Naive thymus-derived CD4-positive, alpha-beta T cell (primary cell): ENCODE measurements at regions of chr3 and their contacts with region 1.

Region 1: GRCh38 chr3:14467814-14468620 is 65.6 kb downstream of the SLC6A6 start:
- DNase-seq: peak; percentile 18 to 63 (median 40)
- ATAC-seq: peak; percentile 77
- H3K4me3 ChIP-seq: no peak overlapping the region
- H3K4me3 Mint-ChIP-seq: no peak overlapping the region
- H3K27ac ChIP-seq: no peak overlapping the region
- H3K27ac Mint-ChIP-seq: peak overlapping the region in 2 of 9 donors; percentile 56 to 75
- H3K4me1 ChIP-seq: no peaks in the 10 kb centered on the region
- H3K4me1 Mint-ChIP-seq: peaks cover 0 to 6% (median 0%) of the 10 kb centered on the region in 7 donors
- H3K27me3 ChIP-seq: no peaks in the 10 kb centered on the region
- H3K27me3 Mint-ChIP-seq: no peaks in the 10 kb centered on the region

Region 2: GRCh38 chr3:14203521-14204079 is 264.4 kb before region 1 on chr3:
- CTCF ChIA-PET with region 1: interaction called, 24 read pairs
- POLR2A ChIA-PET with region 1: no interaction called
- intact Hi-C with region 1: loop called in 1 of 2 experiments (anchors 1 kb)
- DNase-seq: peak in 6 of 9 donors; percentile 27 to 41 (median 33)
- ATAC-seq: peak; percentile 80
- H3K4me3 ChIP-seq: no peak overlapping the region
- H3K4me3 Mint-ChIP-seq: no peak overlapping the region
- H3K27ac ChIP-seq: no peak overlapping the region
- H3K27ac Mint-ChIP-seq: peak overlapping the region in 4 of 9 donors; percentile 12 to 83 (median 55)
- H3K4me1 ChIP-seq: peaks cover 0 to 5% of the 10 kb centered on the region in 2 donors
- H3K4me1 Mint-ChIP-seq: peaks cover 0 to 7% (median 5%) of the 10 kb centered on the region in 7 donors
- H3K27me3 ChIP-seq: no peaks in the 10 kb centered on the region
- H3K27me3 Mint-ChIP-seq: no peaks in the 10 kb centered on the region

Region 3: GRCh38 chr3:14274999-14275961 is 192.7 kb before region 1 on chr3:
- CTCF ChIA-PET with region 1: interaction called, 3 read pairs
- POLR2A ChIA-PET with region 1: no interaction called
- intact Hi-C with region 1: loop called in 1 of 2 experiments (anchors 5 kb)
- DNase-seq: no peak
- ATAC-seq: no peak
- H3K4me3 ChIP-seq: no peak overlapping the region
- H3K4me3 Mint-ChIP-seq: no peak overlapping the region
- H3K27ac ChIP-seq: no peak overlapping the region
- H3K27ac Mint-ChIP-seq: no peak overlapping the region
- H3K4me1 ChIP-seq: no peaks in the 10 kb centered on the region
- H3K4me1 Mint-ChIP-seq: no peaks in the 10 kb centered on the region
- H3K27me3 ChIP-seq: no peaks in the 10 kb centered on the region
- H3K27me3 Mint-ChIP-seq: peaks cover 0 to 10% (median under 1%) of the 10 kb centered on the region in 5 donors

Region 4: GRCh38 chr3:14426063-14426620 is 41.9 kb before region 1 on chr3:
- CTCF ChIA-PET with region 1: interaction called, 11 read pairs
- POLR2A ChIA-PET with region 1: no interaction called
- intact Hi-C with region 1: no loop called
- DNase-seq: peak in 7 of 9 donors; percentile 16 to 33 (median 29)
- ATAC-seq: peak; percentile 75
- H3K4me3 ChIP-seq: peak overlapping the region; percentile 24
- H3K4me3 Mint-ChIP-seq: peak overlapping the region; percentile 50 to 74 (median 69)
- H3K27ac ChIP-seq: peak overlapping the region; percentile 62
- H3K27ac Mint-ChIP-seq: peak overlapping the region; percentile 61 to 100 (median 87)
- H3K4me1 ChIP-seq: peaks cover 72 to 92% of the 10 kb centered on the region in 2 donors
- H3K4me1 Mint-ChIP-seq: peaks cover 76 to 89% (median 86%) of the 10 kb centered on the region in 7 donors
- H3K27me3 ChIP-seq: no peaks in the 10 kb centered on the region
- H3K27me3 Mint-ChIP-seq: no peaks in the 10 kb centered on the region

Region 5: GRCh38 chr3:14640157-14640562 is 172.1 kb after region 1 on chr3:
- CTCF ChIA-PET with region 1: no interaction called
- POLR2A ChIA-PET with region 1: no interaction called
- intact Hi-C with region 1: no loop called
- DNase-seq: no peak
- ATAC-seq: no peak
- H3K4me3 ChIP-seq: no peak overlapping the region
- H3K4me3 Mint-ChIP-seq: no peak overlapping the region
- H3K27ac ChIP-seq: no peak overlapping the region
- H3K27ac Mint-ChIP-seq: no peak overlapping the region
- H3K4me1 ChIP-seq: no peaks in the 10 kb centered on the region
- H3K4me1 Mint-ChIP-seq: peaks cover 0 to 4% (median under 1%) of the 10 kb centered on the region in 7 donors
- H3K27me3 ChIP-seq: no peaks in the 10 kb centered on the region
- H3K27me3 Mint-ChIP-seq: peaks cover 6 to 40% (median 28%) of the 10 kb centered on the region in 5 donors